H1 (cell line): ENCODE measurements at regions of chr16 and their contacts with region 1.

Region 1: GRCh38 chr16:87416826-87417527 is 24.8 kb downstream of the MAP1LC3B start:
- DNase-seq: no peak
- H3K4me3 ChIP-seq: no peak overlapping the region
- H3K27ac ChIP-seq: no peak overlapping the region
- H3K4me1 ChIP-seq: no peaks in the 10 kb centered on the region
- H3K27me3 ChIP-seq: no peaks in the 10 kb centered on the region
- CTCF ChIP-seq: peak in 1 of 3 experiments; percentile 27; a peak in 2 of 4 replicates
- EP300 ChIP-seq: no peak
- POLR2A ChIP-seq: no peak
- RAD21 ChIP-seq: peak; percentile 26 to 40; a peak in 3 of 4 replicates

Region 2: GRCh38 chr16:87108941-87109340 is 308.0 kb before region 1 on chr16:
- CTCF ChIA-PET with region 1: no interaction called
- POLR2A ChIA-PET with region 1: no interaction called
- DNase-seq: no peak
- H3K4me3 ChIP-seq: no peak overlapping the region
- H3K27ac ChIP-seq: no peak overlapping the region
- H3K4me1 ChIP-seq: peaks cover 0 to 4% (median 1%) of the 10 kb centered on the region in 4 experiments; a peak in 3 of 7 replicates
- H3K27me3 ChIP-seq: no peaks in the 10 kb centered on the region
- CTCF ChIP-seq: no peak
- EP300 ChIP-seq: no peak
- POLR2A ChIP-seq: no peak
- RAD21 ChIP-seq: no peak

Region 3: DNA sequence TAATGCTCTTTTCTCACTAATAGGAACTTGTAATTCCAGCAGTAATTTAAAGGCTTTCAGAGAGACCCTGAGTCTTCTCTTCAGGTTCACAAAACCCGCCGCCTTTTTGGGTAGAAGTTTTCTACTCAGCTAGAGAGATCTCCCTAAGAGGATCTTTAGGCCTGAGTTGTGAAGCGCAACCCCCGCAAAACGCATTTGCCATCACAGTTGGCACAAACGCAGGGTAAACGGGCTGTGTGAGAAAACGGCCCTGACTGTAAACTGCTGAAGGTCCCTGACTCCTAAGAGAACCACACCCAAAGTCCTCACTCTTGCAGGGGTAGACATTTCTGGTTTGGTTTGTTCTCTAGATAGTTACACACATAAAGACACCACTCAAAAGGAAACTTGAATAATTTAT is 13.6 kb before region 1 on chr16:
- CTCF ChIA-PET with region 1: interaction called, 10 read pairs
- POLR2A ChIA-PET with region 1: interaction called, 5 read pairs
- DNase-seq: no peak
- H3K4me3 ChIP-seq: no peak overlapping the region
- H3K27ac ChIP-seq: no peak overlapping the region
- H3K4me1 ChIP-seq: no peaks in the 10 kb centered on the region
- H3K27me3 ChIP-seq: no peaks in the 10 kb centered on the region
- CTCF ChIP-seq: no peak
- EP300 ChIP-seq: no peak
- POLR2A ChIP-seq: no peak
- RAD21 ChIP-seq: no peak